Activated naive CD4-positive, alpha-beta T cell treated with anti-CD3 and anti-CD28 coated beads, Interleukin-2, amount 10 ng/mL, durations not matched to agents 7 days and 5 days (primary cell): ENCODE measurements at regions of chr2 and their contacts with region 1.

Region 1: DNA sequence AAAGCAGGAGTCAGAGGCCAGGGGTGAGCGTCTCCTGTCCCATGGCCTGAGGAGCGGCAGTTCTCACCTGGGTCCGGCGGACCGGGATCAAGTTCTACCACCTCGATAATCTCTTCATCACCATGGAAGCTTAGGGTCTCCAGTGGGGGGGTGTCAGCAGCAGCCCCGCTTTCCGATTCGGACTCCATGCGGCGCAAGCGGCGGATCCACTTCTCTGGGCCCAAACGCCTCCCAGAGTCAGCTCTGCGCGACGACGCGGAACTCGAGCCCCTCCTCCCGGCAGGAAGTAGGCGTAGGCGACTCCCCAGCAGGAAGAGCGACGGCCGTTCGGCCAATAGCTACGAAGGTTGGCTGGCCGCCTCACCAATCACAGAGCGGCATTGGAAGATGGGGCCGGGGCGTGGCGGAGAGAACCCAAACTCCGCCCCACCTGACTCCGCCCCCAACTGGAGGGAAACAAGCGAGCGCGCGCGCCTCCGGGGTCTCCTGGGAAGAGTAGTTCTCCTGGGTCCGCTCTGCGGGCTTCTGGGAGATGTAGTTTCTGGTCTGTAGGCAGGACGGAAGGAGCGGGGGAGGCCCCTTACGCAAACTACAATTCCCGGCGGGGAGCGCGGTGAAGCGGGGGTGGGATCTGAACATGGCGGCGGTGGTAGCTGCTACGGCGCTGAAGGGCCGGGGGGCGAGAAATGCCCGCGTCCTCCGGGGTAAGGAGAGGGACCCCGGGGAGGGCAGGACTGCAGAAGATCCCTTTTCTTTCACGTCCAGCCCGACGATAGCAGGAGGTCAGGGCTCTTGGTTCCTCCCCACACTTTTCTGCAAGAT is at the starts of genes AAMP and PNKD:
- DNase-seq: peak; percentile 100
- H3K4me3 Mint-ChIP-seq: peak within 1 kb of the TSS; percentile 92
- H3K27ac Mint-ChIP-seq: peak within 1 kb of the TSS; percentile 91
- H3K4me1 Mint-ChIP-seq: peaks cover 53% of the 10 kb centered on the region
- H3K27me3 Mint-ChIP-seq: peaks cover 6% of the 10 kb centered on the region

Region 2: DNA sequence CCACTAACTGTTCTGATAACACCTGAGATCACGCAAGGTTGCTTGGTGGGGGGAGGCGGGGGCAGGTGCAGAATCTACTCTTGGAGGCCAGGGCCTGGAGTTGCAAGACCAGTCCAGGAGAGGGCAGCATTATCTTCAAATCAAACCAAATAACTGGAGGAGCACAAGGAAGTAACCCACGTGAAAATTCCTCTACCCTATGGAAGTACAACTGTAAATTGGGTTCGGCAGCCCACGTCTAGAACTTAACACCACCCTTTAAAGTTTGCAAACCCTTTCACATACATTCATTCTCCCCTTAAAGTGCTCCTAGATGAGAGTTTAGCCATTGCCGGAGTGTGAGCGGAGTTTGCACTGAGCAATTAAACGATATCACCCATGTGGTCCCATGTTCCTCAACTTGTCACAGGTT is 83.7 kb before region 1 on chr2:
- CTCF ChIA-PET with region 1: interaction called, 19 read pairs
- DNase-seq: peak; percentile 81
- H3K4me3 Mint-ChIP-seq: no peak overlapping the region
- H3K27ac Mint-ChIP-seq: no peak overlapping the region
- H3K4me1 Mint-ChIP-seq: peaks cover 10% of the 10 kb centered on the region
- H3K27me3 Mint-ChIP-seq: peaks cover 33% of the 10 kb centered on the region

Region 3: DNA sequence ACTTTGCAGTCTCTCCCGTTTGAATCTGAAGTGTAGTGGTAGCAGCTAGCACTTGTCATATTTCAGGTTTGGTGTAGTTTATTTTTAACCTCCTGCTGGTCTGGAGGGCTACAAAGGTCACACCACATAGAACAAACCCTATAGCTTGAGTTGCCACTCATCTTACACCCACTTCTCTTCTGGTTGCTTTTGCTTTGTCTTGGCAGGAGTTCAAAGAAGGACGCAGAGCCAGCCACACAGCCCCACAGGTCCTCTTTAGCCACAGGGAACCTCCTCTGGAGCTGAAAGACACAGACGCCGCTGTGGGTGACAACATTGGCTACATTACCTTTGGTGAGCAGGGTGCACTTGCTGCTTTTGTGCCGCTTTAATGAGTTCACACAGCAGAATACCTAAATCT is 24.9 kb before region 1 on chr2:
- CTCF ChIA-PET with region 1: no interaction called
- DNase-seq: no peak
- H3K4me3 Mint-ChIP-seq: no peak overlapping the region
- H3K27ac Mint-ChIP-seq: no peak overlapping the region
- H3K4me1 Mint-ChIP-seq: peaks cover 11% of the 10 kb centered on the region
- H3K27me3 Mint-ChIP-seq: no peaks in the 10 kb centered on the region

Region 4: GRCh38 chr2:218257390-218257981 is 12.6 kb before region 1 on chr2:
- CTCF ChIA-PET with region 1: interaction called, 16 read pairs
- DNase-seq: peak; percentile 66
- H3K4me3 Mint-ChIP-seq: no peak overlapping the region
- H3K27ac Mint-ChIP-seq: peak overlapping the region; percentile 88
- H3K4me1 Mint-ChIP-seq: peaks cover 27% of the 10 kb centered on the region
- H3K27me3 Mint-ChIP-seq: no peaks in the 10 kb centered on the region

Region 5: GRCh38 chr2:218292048-218293014 is 22.2 kb after region 1 on chr2 and contains the start of gene TMBIM1:
- CTCF ChIA-PET with region 1: interaction called, 195 read pairs
- DNase-seq: peak; percentile 82
- H3K4me3 Mint-ChIP-seq: peak within 1 kb of the TSS; percentile 78
- H3K27ac Mint-ChIP-seq: peak within 1 kb of the TSS; percentile 88
- H3K4me1 Mint-ChIP-seq: peaks cover 69% of the 10 kb centered on the region
- H3K27me3 Mint-ChIP-seq: peaks cover 4% of the 10 kb centered on the region

Region 6: GRCh38 chr2:218301176-218301819 is 31.2 kb after region 1 on chr2:
- CTCF ChIA-PET with region 1: interaction called, 195 read pairs
- DNase-seq: peak; percentile 94
- H3K4me3 Mint-ChIP-seq: no peak overlapping the region
- H3K27ac Mint-ChIP-seq: peak overlapping the region; percentile 4
- H3K4me1 Mint-ChIP-seq: peaks cover 6% of the 10 kb centered on the region
- H3K27me3 Mint-ChIP-seq: peaks cover 32% of the 10 kb centered on the region

Region 7: GRCh38 chr2:218360447-218360846 is 90.3 kb after region 1 on chr2:
- CTCF ChIA-PET with region 1: interaction called, 52 read pairs
- DNase-seq: no peak
- H3K4me3 Mint-ChIP-seq: no peak overlapping the region
- H3K27ac Mint-ChIP-seq: no peak overlapping the region
- H3K4me1 Mint-ChIP-seq: peaks cover 6% of the 10 kb centered on the region
- H3K27me3 Mint-ChIP-seq: peaks cover 40% of the 10 kb centered on the region

Region 8: GRCh38 chr2:218839430-218839829 is 569.3 kb after region 1 on chr2:
- CTCF ChIA-PET with region 1: no interaction called
- DNase-seq: no peak
- H3K4me3 Mint-ChIP-seq: no peak overlapping the region
- H3K27ac Mint-ChIP-seq: no peak overlapping the region
- H3K4me1 Mint-ChIP-seq: no peaks in the 10 kb centered on the region
- H3K27me3 Mint-ChIP-seq: peaks cover 41% of the 10 kb centered on the region